Left ventricle myocardium inferior (tissue), 1 donor: ENCODE measurements at regions of chr9 and their contacts with region 1.

Region 1: DNA sequence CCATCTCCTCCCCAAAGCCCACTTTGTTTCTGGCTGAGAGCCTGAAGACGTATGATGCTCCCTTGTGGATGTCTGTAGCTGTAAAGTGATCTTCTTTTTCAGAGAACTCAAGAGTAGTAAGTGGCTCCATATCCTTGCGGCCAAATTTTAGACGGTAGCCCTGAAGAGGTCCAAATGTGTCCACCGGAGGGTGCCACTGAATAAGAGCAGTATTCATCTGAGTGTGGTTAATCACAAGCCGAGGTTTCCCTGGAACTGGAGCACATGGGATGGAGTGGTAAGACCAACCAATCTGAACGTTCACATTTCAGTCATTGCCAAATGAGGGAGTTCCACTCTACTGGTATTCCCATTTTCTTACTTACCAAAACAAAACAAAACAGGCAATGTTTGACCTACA is 686.5 kb upstream of the DMAC1 start:
- DNase-seq: no peak
- H3K4me3 ChIP-seq: no peak overlapping the region
- H3K27ac ChIP-seq: no peak overlapping the region
- H3K4me1 ChIP-seq: no peaks in the 10 kb centered on the region
- H3K27me3 ChIP-seq: no peaks in the 10 kb centered on the region
- CTCF ChIP-seq: peak; percentile 62

Region 2: GRCh38 chr9:8895861-8896224 is 409.7 kb after region 1 on chr9:
- intact Hi-C with region 1: loop called (anchors 10 kb)
- DNase-seq: no peak
- H3K4me3 ChIP-seq: peak overlapping the region; percentile 9
- H3K27ac ChIP-seq: no peak overlapping the region
- H3K4me1 ChIP-seq: peaks cover 13% of the 10 kb centered on the region
- H3K27me3 ChIP-seq: no peaks in the 10 kb centered on the region
- CTCF ChIP-seq: peak; percentile 68

Region 3: GRCh38 chr9:9002826-9003583 is 516.9 kb after region 1 on chr9:
- intact Hi-C with region 1: loop called (anchors 10 kb)
- DNase-seq: no peak
- H3K4me3 ChIP-seq: no peak overlapping the region
- H3K27ac ChIP-seq: no peak overlapping the region
- H3K4me1 ChIP-seq: no peaks in the 10 kb centered on the region
- H3K27me3 ChIP-seq: no peaks in the 10 kb centered on the region
- CTCF ChIP-seq: peak; percentile 54